Body of pancreas (tissue), 4 donors: ENCODE measurements at regions of chr3 and their contacts with region 1.

Region 1: DNA sequence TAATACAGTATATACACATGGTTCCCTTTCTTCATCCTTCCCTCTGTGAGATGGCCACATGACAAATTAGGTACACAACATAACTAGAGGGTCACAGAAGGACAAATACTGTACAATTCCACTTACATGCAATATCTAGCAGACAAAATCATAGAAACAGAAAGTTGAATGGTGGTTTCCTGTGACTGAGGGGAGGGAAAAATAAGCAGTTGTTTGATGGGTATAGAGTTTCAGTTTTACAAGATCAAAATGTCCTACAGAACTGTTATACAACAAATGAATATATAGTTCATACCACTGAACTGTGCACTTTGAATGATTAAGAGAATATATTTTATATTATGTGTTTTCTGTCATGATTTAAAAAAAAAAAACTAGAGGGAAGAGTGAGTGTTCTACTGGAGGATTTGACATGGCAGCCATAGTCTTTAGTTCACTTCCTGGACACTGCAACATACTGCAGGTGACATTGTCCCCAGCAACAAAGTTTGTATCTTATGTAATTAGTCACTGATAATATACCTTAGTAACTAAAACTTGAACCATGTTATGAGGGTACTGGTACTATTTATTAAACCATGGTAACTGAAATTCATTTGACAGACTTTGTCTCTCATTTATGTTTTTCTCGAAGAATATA is 37.2 kb downstream of the CCDC54 start:
- DNase-seq: no peak
- ATAC-seq: no peak
- H3K4me3 ChIP-seq: no peak overlapping the region
- H3K27ac ChIP-seq: no peak overlapping the region
- H3K4me1 ChIP-seq: no peaks in the 10 kb centered on the region
- H3K27me3 ChIP-seq: no peaks in the 10 kb centered on the region
- CTCF ChIP-seq: no peak
- POLR2A ChIP-seq: no peak

Region 2: GRCh38 chr3:107172411-107172810 is 242.0 kb before region 1 on chr3:
- intact Hi-C with region 1: no loop called
- DNase-seq: no peak
- ATAC-seq: no peak
- H3K4me3 ChIP-seq: no peak overlapping the region
- H3K27ac ChIP-seq: no peak overlapping the region
- H3K4me1 ChIP-seq: no peaks in the 10 kb centered on the region
- H3K27me3 ChIP-seq: no peaks in the 10 kb centered on the region
- CTCF ChIP-seq: no peak
- POLR2A ChIP-seq: no peak

Region 3: GRCh38 chr3:107206141-107206540 is 208.3 kb before region 1 on chr3:
- intact Hi-C with region 1: no loop called
- DNase-seq: peak in 1 of 4 donors; percentile 33
- ATAC-seq: no peak
- H3K4me3 ChIP-seq: no peak overlapping the region
- H3K27ac ChIP-seq: no peak overlapping the region
- H3K4me1 ChIP-seq: peaks cover 23% of the 10 kb centered on the region
- H3K27me3 ChIP-seq: no peaks in the 10 kb centered on the region
- CTCF ChIP-seq: peak in 6 of 7 experiments; percentile 41 to 59 (median 51)
- POLR2A ChIP-seq: no peak

Region 4: GRCh38 chr3:107271787-107272387 is 142.6 kb before region 1 on chr3:
- intact Hi-C with region 1: loop called (anchors 10 kb)
- DNase-seq: no peak
- ATAC-seq: no peak
- H3K4me3 ChIP-seq: no peak overlapping the region
- H3K27ac ChIP-seq: no peak overlapping the region
- H3K4me1 ChIP-seq: no peaks in the 10 kb centered on the region
- H3K27me3 ChIP-seq: no peaks in the 10 kb centered on the region
- CTCF ChIP-seq: peak; percentile 20 to 68 (median 63)
- POLR2A ChIP-seq: no peak

Region 5: DNA sequence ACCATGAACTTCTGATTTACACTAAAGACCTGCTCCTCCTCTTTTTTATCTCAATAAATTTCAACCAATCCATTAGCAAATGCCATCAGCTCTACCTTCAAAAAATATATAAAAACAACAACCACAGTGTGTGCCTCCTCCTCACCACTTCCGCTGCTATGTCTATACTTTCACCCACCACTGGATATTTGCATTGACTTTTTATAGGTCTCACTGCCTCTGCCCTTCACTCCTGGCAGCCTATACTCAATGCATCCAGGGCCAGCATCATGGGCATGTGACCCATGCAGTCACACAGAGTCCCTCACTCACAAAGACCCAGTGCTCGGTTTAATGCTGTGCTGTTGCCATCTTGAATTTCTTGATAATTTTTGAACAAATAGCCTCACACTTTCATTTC is 90.7 kb before region 1 on chr3:
- intact Hi-C with region 1: no loop called
- DNase-seq: no peak
- ATAC-seq: no peak
- H3K4me3 ChIP-seq: no peak overlapping the region
- H3K27ac ChIP-seq: no peak overlapping the region
- H3K4me1 ChIP-seq: no peaks in the 10 kb centered on the region
- H3K27me3 ChIP-seq: no peaks in the 10 kb centered on the region
- CTCF ChIP-seq: no peak
- POLR2A ChIP-seq: no peak